IMR-90 (cell line): ENCODE measurements at regions of chr1 and their contacts with region 1.

Region 1: DNA sequence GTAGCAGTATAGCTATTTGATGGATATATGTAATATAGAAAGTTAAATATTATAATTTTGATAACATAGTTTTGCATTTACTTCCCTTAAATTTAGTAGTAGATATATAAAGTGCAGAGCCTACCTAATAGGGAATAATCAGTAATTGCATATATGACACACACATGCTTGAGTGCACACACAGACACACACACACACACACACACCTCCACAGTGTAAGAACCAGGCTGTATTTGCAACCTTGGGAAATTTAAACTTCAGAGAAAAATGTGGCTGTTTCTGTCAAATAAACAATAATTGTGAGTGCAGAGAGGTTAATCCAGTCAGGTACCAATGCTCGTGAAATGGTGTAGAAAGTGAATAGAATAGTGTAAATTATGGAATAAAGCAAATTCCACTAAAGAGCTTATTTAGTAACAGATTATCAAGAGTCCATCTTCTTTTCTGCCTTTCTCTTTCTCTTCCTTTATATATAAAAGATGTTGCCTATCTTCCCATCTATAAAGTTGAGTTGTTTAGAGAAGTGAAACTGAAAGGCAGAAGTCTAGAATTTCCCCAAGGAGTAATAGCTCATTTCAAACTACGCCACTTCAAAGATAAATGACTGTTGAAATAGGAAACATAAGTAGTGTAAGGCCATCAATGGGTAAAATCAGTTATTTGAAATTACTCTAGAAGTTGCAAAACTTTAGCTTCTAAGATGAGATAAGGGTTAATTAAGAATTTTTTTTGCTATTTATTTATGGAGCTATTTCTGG is 273.7 kb downstream of the SRGAP2C start:
- DNase-seq: no peak
- ATAC-seq: no peak
- H3K4me3 ChIP-seq: no peak overlapping the region
- H3K27ac ChIP-seq: no peak overlapping the region
- H3K4me1 ChIP-seq: no peaks in the 10 kb centered on the region
- H3K27me3 ChIP-seq: no peaks in the 10 kb centered on the region; the same call in 1 of the 2 replicates
- CTCF ChIP-seq: no peak
- POLR2A ChIP-seq: no peak
- RAD21 ChIP-seq: no peak

Region 2: GRCh38 chr1:121483961-121484424 is 25.5 kb after region 1 on chr1:
- CTCF ChIA-PET with region 1: no interaction called
- POLR2A ChIA-PET with region 1: no interaction called
- dilution Hi-C with region 1: no loop called
- in situ Hi-C with region 1: no loop called
- intact Hi-C with region 1: loop called (anchors 2 kb)
- DNase-seq: peak; percentile 88
- ATAC-seq: peak; percentile 94
- H3K4me3 ChIP-seq: no peak overlapping the region
- H3K27ac ChIP-seq: no peak overlapping the region
- H3K4me1 ChIP-seq: no peaks in the 10 kb centered on the region
- H3K27me3 ChIP-seq: peaks cover 2% of the 10 kb centered on the region
- CTCF ChIP-seq: no peak
- POLR2A ChIP-seq: no peak
- RAD21 ChIP-seq: no peak